ENCODE measurements at regions of chr7 and their contacts with region 1.

Region 1: GRCh38 chr7:30062591-30062990 is 34.4 kb downstream of the PLEKHA8 start:
- DNase-seq: peak; percentile 51
- H3K4me3 ChIP-seq: no peak overlapping the region
- H3K27ac ChIP-seq: no peak overlapping the region
- H3K4me1 ChIP-seq: no peaks in the 10 kb centered on the region
- H3K27me3 ChIP-seq: no peaks in the 10 kb centered on the region
- CTCF ChIP-seq: peak; percentile 74

Region 2: GRCh38 chr7:29748286-29749108 is 314.1 kb before region 1 on chr7:
- CTCF ChIA-PET with region 1: interaction called, 4 read pairs
- POLR2A ChIA-PET with region 1: no interaction called
- intact Hi-C with region 1: loop called (anchors 5 kb)
- DNase-seq: peak; percentile 71
- H3K4me3 ChIP-seq: no peak overlapping the region
- H3K27ac ChIP-seq: no peak overlapping the region
- H3K4me1 ChIP-seq: no peaks in the 10 kb centered on the region
- H3K27me3 ChIP-seq: no peaks in the 10 kb centered on the region
- CTCF ChIP-seq: peak; percentile 72

Region 3: DNA sequence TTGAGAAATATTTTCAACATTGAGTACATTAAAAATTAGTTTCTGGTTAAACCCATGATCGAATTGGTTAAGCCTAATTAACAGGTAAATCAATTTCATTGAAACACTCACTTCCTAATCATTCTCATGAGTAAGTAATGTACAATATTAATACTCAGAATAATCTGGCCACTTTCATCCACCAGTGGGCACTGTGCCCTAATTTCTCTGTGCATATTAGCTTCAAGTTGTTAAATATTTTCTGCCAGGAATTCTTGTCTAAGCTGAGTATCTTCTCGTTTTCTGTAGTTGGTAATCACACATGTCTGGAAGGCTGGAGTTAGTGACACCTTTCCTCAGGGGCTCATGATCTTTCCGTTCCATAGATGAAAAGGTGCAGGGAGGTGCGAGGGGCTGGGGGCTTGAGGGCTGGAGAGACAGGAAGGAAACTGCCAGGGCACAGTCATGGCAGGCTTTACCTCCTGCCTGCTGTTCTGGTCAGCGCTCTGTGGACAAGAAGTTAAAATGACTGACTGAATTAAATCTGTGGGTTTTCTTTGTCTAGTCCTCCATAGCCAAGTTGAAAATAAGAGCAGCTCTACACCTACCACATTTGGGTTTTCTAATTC is 184.4 kb before region 1 on chr7:
- CTCF ChIA-PET with region 1: interaction called, 9 read pairs
- POLR2A ChIA-PET with region 1: no interaction called
- intact Hi-C with region 1: loop called (anchors 5 kb)
- DNase-seq: peak; percentile 66
- H3K4me3 ChIP-seq: no peak overlapping the region
- H3K27ac ChIP-seq: no peak overlapping the region
- H3K4me1 ChIP-seq: no peaks in the 10 kb centered on the region
- H3K27me3 ChIP-seq: no peaks in the 10 kb centered on the region
- CTCF ChIP-seq: peak; percentile 76

Region 4: DNA sequence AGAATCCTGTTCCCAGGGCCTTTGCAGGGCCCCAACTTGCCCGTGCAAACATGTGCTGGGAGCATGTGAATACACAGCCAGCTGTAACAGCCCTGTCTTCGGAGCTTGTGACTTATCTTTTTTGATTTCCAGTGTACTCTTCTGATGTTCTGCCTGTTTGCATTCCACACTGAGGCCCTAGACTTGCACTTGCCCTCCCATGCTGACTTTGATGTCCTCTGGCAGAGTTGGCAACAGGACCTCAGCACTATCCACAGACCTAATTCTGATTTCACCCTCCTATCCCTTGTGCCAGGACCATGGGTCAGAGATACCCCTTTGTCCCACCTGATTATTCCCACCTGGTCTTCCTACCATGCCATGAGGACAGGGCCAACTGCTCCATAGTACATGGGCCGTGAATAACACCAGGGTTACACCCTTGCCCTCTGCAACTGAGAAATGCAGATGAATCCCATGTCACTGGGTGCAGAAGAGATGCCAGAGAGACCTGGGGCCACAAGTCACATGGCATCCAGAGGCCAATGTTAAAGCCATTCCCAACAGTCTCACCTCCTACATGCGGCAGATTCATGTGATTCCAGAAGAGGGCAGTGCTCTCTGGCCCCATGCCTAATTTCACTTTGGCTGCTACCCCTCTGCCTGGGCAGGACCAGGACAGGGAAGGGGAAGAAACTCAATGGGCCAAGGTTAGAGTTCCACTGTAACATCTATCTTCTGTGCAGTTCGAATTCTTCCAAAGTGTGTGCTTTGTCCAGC is 116.0 kb before region 1 on chr7:
- CTCF ChIA-PET with region 1: no interaction called
- POLR2A ChIA-PET with region 1: no interaction called
- intact Hi-C with region 1: loop called (anchors 2 kb)
- DNase-seq: peak; percentile 42
- H3K4me3 ChIP-seq: no peak overlapping the region
- H3K27ac ChIP-seq: no peak overlapping the region
- H3K4me1 ChIP-seq: no peaks in the 10 kb centered on the region
- H3K27me3 ChIP-seq: no peaks in the 10 kb centered on the region
- CTCF ChIP-seq: peak; percentile 49; the same call in 1 of the 2 replicates

Region 5: DNA sequence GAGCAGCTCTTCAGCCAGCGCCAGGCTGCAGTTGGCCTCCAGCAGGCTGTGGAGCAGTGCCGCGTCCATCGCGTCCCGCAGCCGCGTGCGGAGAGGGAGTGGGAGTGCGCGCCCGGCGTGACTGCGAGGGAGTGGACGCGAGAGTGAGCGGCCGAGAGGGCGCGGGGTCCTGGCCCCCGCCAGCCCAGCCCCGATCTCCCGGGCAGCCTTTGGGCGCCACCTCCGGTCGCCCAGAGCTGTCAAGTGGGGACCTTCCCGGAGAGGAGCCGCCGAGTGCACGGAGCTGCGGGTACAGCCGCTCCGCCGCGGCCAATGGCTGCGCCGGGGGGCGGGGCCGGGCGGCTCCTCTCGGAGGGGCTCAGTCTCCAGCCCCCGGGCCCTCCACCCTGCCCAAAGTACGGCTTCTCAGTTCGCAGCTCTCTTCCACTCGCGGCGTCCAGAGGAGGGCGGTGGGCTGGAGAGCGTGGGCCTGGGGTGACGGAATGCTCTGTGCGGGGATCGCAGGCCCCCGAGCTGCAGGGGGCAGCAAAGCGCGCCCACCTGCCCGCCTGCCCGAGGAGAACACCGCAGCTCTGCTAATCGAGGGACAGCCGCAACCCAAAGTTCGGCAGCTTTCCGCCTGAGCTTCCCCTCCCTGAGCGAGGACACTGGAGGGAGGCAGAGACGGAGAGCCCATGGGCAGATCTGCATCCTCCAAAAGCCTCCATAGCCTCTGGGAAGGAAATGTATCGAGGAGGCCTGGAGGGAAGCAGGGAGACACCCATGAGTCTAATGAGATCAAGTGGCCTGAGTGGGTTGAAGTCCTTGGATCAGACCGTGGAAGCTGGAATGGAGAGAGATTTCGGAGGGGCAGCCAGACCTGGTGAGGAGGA is 619.9 kb after region 1 on chr7 and contains the start of gene CRHR2:
- CTCF ChIA-PET with region 1: no interaction called
- POLR2A ChIA-PET with region 1: no interaction called
- intact Hi-C with region 1: no loop called
- DNase-seq: peak; percentile 10
- H3K4me3 ChIP-seq: peak within 1 kb of the TSS; percentile 33
- H3K27ac ChIP-seq: no peak within 1 kb of the TSS
- H3K4me1 ChIP-seq: peaks cover 9% of the 10 kb centered on the region
- H3K27me3 ChIP-seq: peaks cover 76% of the 10 kb centered on the region
- CTCF ChIP-seq: peak; percentile 54
- total RNA-seq, gene CRHR2: not detected in 2 replicates